AG04450 (cell line): ENCODE measurements at regions of chr9 and their contacts with region 1.

Region 1: GRCh38 chr9:131270171-131271015 is 5.9 kb downstream of the FAM78A start:
- DNase-seq: no peak
- H3K4me3 ChIP-seq: no peak overlapping the region
- H3K27ac ChIP-seq: no peak overlapping the region
- H3K27me3 ChIP-seq: peaks cover 18% of the 10 kb centered on the region
- CTCF ChIP-seq: no peak

Region 2: GRCh38 chr9:131214876-131215275 is 55.5 kb before region 1 on chr9:
- CTCF ChIA-PET with region 1: interaction called, 12 read pairs
- POLR2A ChIA-PET with region 1: no interaction called
- DNase-seq: no peak
- H3K4me3 ChIP-seq: no peak overlapping the region
- H3K27ac ChIP-seq: no peak overlapping the region
- H3K27me3 ChIP-seq: no peaks in the 10 kb centered on the region
- CTCF ChIP-seq: no peak

Region 3: DNA sequence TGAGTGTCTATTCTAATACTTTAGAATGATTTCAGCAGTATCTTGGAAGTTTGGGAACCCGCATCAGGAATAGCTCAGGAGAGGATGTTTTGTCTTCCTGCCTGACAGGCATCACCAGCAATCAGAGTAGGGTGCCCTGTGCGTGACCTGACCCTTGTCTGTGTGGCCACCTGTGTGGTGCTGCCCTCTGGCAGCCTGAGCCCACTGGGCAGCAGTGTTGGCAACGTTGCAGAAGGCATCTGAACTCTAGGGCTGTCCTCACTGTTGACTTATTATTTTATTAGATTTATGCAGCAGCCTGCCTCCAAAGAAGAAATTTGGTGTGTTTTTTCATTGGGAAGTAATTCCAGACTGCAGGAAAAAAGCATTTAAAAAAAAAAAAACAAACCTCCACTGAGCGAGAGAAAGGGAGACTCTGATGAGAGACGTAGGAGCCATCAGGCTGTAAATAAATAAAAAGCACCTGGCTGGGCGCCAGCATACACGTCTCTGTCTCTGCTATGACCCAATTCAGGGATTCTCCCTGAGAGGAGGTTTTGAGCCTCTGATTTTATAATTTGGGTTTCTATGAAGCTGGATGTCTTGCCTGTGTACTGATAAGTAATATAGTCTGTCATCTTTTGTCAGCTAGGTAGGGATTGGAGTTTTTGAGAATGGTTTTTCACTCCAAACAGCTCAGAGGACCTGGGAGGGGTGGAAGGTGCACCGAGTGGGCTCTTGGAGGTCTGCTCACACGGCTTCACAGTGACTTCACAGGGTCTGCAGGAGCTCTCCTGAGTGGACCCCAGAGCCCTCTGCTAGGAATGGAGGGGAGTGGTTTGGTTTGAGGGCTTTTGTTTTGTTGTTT is 43.1 kb before region 1 on chr9:
- CTCF ChIA-PET with region 1: no interaction called
- POLR2A ChIA-PET with region 1: no interaction called
- DNase-seq: no peak
- H3K4me3 ChIP-seq: no peak overlapping the region
- H3K27ac ChIP-seq: no peak overlapping the region
- H3K27me3 ChIP-seq: no peaks in the 10 kb centered on the region
- CTCF ChIP-seq: no peak

Region 4: GRCh38 chr9:131297903-131298302 is 27.5 kb after region 1 on chr9:
- CTCF ChIA-PET with region 1: no interaction called
- POLR2A ChIA-PET with region 1: no interaction called
- DNase-seq: no peak
- H3K4me3 ChIP-seq: no peak overlapping the region
- H3K27ac ChIP-seq: no peak overlapping the region
- H3K27me3 ChIP-seq: peaks cover 7% of the 10 kb centered on the region
- CTCF ChIP-seq: no peak

Region 5: GRCh38 chr9:131407717-131408195 is 137.4 kb after region 1 on chr9:
- CTCF ChIA-PET with region 1: no interaction called
- POLR2A ChIA-PET with region 1: no interaction called
- DNase-seq: no peak
- H3K4me3 ChIP-seq: 0 out of 2 replicates have a peak overlapping the region, but pooled peaks have one; percentile 10
- H3K27ac ChIP-seq: peak overlapping the region; percentile 24
- H3K27me3 ChIP-seq: no peaks in the 10 kb centered on the region
- CTCF ChIP-seq: peak; percentile 32